Gastrocnemius medialis (tissue), 4 donors: ENCODE measurements at regions of chr5 and their contacts with region 1.

Region 1: DNA sequence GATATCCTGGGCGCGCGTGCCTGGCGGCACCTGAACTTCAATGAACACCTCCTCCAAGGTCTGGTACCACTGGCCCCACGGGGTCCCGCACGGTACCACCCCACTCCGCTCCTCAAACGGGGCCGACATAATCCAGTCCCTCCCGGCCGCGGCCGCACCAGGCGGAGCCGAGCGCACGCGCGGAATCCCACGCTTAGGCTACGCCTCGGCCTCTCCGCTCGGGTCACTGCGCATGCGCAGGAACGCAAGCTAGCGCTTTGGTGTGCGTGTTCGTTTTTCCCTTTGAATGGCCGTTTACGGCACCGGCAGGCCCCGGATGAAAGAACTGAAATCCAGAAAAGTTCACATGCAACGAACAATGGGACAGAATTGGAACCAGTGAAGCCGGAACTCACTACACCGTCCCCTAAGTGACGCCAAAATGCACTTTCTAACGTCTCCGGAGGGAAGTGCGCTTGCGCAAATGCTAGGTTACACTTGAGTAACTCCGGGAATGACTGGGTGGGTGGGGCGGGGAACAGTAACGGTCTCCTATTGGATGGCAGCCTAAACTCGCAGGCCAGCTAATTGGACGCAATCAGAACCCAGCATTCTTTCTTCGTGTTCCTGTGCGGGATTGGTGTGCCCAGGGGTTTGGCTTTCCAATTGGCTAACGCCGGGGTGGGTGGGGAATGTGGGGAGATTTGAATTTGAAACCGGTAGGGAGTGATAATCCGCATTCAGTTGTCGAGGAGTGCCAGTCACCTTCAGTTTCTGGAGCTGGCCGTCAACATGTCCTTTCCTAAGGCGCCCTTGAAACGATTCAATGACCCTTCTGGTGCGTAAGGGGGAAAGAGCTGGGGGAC is at the starts of genes HMMR and NUDCD2:
- DNase-seq: peak; percentile 95 to 97
- ATAC-seq: peak; percentile 97 to 98
- H3K4me3 ChIP-seq: peak within 1 kb of the TSS; percentile 63 to 91 (median 76)
- H3K27ac ChIP-seq: peak within 1 kb of the TSS; percentile 94 to 97 (median 96)
- H3K4me1 ChIP-seq: peaks cover 26 to 27% of the 10 kb centered on the region in 2 donors
- H3K27me3 ChIP-seq: no peaks in the 10 kb centered on the region
- CTCF ChIP-seq: peak in 1 of 5 experiments; percentile 42
- POLR2A ChIP-seq: peak; percentile 81 to 90
- total RNA-seq, gene HMMR: 0.12 to 1.3 (median 0.55) TPM
- total RNA-seq, gene NUDCD2: 4.2 to 9.1 (median 5.1) TPM

Region 2: GRCh38 chr5:163437309-163438182 is 22.6 kb before region 1 on chr5 and contains the start of gene CCNG1:
- in situ Hi-C with region 1: no loop called
- intact Hi-C with region 1: loop called (anchors 1 kb)
- DNase-seq: peak; percentile 92 to 94
- ATAC-seq: peak; percentile 91
- H3K4me3 ChIP-seq: peak within 1 kb of the TSS; percentile 79 to 100 (median 84)
- H3K27ac ChIP-seq: peak within 1 kb of the TSS; percentile 91 to 100 (median 92)
- H3K4me1 ChIP-seq: peaks cover 23 to 47% of the 10 kb centered on the region in 2 donors
- H3K27me3 ChIP-seq: no peaks in the 10 kb centered on the region
- CTCF ChIP-seq: peak in 3 of 5 experiments; percentile 21 to 39 (median 34)
- POLR2A ChIP-seq: peak; percentile 68 to 90
- total RNA-seq, gene CCNG1: 63.7 to 125 (median 109) TPM

Region 3: DNA sequence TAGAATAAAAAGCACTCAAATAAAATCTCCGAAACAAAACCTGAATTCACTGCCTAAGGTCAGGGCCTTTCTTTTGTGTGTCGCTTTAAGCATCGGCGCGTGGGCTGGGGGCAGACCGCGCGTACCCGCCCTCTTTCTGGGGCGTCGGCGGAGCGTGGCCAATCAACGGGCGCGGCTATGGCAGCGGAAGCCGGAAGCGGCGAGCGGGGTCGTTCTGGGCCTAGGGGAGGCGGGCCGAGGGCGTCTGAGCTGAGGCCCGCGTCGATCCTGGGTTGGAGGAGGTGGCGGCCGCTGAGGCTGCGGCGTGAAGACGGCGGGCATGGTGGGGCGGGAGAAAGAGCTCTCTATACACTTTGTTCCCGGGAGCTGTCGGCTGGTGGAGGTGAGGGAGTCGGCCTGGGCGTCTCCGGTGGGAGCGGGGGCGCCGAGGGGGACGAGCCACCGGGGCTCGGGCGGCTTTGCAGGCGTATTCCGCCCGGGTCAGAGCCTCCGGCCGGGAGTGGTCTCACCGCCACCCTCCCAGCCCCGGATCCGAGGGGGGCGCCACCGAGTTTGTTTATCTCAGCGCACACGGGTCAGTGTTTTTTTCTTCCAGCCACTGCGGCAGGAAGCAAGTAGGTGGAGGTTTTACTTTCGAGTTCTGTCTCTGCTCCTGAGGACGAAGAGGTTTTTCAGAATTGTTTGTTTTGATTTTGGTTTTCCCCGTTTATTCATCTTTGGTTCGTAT is 45.4 kb after region 1 on chr5 and contains the start of gene MAT2B:
- in situ Hi-C with region 1: loop called in 2 of 4 experiments (anchors 5 to 10 kb)
- intact Hi-C with region 1: loop called (anchors 1 kb)
- DNase-seq: peak; percentile 93 to 94
- ATAC-seq: peak; percentile 81
- H3K4me3 ChIP-seq: peak within 1 kb of the TSS; percentile 72 to 88 (median 80)
- H3K27ac ChIP-seq: peak within 1 kb of the TSS; percentile 92 to 98 (median 96)
- H3K4me1 ChIP-seq: peaks cover 55 to 56% of the 10 kb centered on the region in 2 donors
- H3K27me3 ChIP-seq: no peaks in the 10 kb centered on the region
- CTCF ChIP-seq: peak in 3 of 5 experiments; percentile 51 to 67 (median 63)
- POLR2A ChIP-seq: peak; percentile 89 to 96
- total RNA-seq, gene MAT2B: 26.6 to 44.7 (median 32.1) TPM

Region 4: DNA sequence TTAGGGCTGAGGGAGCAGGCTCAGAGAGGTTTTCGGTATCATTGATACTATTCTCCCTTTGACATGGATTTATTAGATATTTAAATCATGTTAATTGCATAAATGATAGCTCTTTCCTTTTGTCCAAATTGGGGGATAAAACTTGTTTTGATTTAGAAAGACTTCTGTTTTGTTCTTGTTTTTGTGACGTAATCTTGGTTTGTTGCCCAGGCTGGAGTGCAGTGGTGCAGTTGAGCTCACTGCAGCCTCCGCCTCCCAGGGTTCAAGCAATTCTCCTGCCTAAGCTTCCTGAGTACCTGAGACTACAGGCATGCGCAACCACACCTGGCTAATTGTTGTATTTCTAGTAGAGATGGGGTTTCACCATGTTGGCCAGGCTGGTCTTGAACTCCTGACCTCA is 52.4 kb after region 1 on chr5:
- in situ Hi-C with region 1: loop called in 2 of 4 experiments (anchors 5 to 10 kb)
- intact Hi-C with region 1: no loop called
- DNase-seq: no peak
- ATAC-seq: no peak
- H3K4me3 ChIP-seq: no peak overlapping the region
- H3K27ac ChIP-seq: no peak overlapping the region
- H3K4me1 ChIP-seq: peaks cover 41 to 46% of the 10 kb centered on the region in 2 donors
- H3K27me3 ChIP-seq: no peaks in the 10 kb centered on the region
- CTCF ChIP-seq: no peak
- POLR2A ChIP-seq: no peak

Region 5: DNA sequence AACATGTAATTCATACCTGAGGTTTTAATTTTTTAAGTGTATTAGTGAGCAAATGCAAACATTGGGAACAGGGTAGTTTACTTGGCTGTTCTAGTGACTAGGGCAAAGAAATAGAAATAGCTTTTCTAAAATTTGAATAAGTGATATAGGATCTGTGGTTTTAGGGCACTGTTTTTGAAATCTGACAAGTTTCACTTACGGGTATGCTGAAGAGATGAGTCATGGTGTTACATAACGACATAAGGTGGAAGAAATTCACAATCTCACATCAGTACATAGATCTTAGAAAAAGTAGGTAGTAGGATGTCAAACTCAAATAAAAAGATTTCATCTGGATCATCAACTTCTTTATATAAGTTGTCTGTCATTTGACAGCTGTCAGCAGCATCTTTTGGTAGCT is 817.6 kb after region 1 on chr5:
- in situ Hi-C with region 1: no loop called
- intact Hi-C with region 1: no loop called
- DNase-seq: no peak
- ATAC-seq: no peak
- H3K4me3 ChIP-seq: no peak overlapping the region
- H3K27ac ChIP-seq: no peak overlapping the region
- H3K4me1 ChIP-seq: no peaks in the 10 kb centered on the region
- H3K27me3 ChIP-seq: no peaks in the 10 kb centered on the region
- CTCF ChIP-seq: no peak
- POLR2A ChIP-seq: no peak